A549 (cell line): ENCODE measurements at regions of chr6 and their contacts with region 1.

Region 1: GRCh38 chr6:27146706-27147505 is 100.6 kb upstream of the PRSS16 start:
- DNase-seq: peak; percentile 96 to 99
- ATAC-seq: peak; percentile 82 to 84
- H3K4me3 ChIP-seq: peak overlapping the region; percentile 67
- H3K27ac ChIP-seq: peak overlapping the region; percentile 89 to 98
- H3K4me1 ChIP-seq: peaks cover 26% of the 10 kb centered on the region; the same call in 2 of the 3 replicates
- CTCF ChIP-seq: no peak
- EP300 ChIP-seq: no peak
- POLR2A ChIP-seq: peak; percentile 96
- RAD21 ChIP-seq: no peak

Region 2: GRCh38 chr6:27126815-27127537 is 19.9 kb before region 1 on chr6:
- CTCF ChIA-PET with region 1: interaction called, 6 read pairs
- POLR2A ChIA-PET with region 1: interaction called, 226 read pairs
- DNase-seq: peak; percentile 41 to 91
- ATAC-seq: peak; percentile 86
- H3K4me3 ChIP-seq: peak overlapping the region; percentile 41
- H3K27ac ChIP-seq: peak overlapping the region; percentile 80 to 91
- H3K4me1 ChIP-seq: peaks cover 34% of the 10 kb centered on the region; the same call in 2 of the 3 replicates
- CTCF ChIP-seq: peak; percentile 82
- EP300 ChIP-seq: no peak
- POLR2A ChIP-seq: peak; percentile 22; the same call in 1 of the 2 replicates
- RAD21 ChIP-seq: peak; percentile 59 to 63

Region 3: GRCh38 chr6:27132532-27133280 is 14.2 kb before region 1 on chr6:
- CTCF ChIA-PET with region 1: interaction called, 7 read pairs
- POLR2A ChIA-PET with region 1: interaction called, 226 read pairs
- DNase-seq: peak; percentile 93 to 99
- ATAC-seq: peak; percentile 81 to 83
- H3K4me3 ChIP-seq: peak overlapping the region; percentile 75
- H3K27ac ChIP-seq: peak overlapping the region; percentile 85 to 96
- H3K4me1 ChIP-seq: peaks cover 46% of the 10 kb centered on the region
- CTCF ChIP-seq: no peak
- EP300 ChIP-seq: 0 out of 5 replicates have a peak, but pooled peaks of 1 of the 2 experiments have one; percentile 11
- POLR2A ChIP-seq: peak; percentile 96
- RAD21 ChIP-seq: no peak

Region 4: DNA sequence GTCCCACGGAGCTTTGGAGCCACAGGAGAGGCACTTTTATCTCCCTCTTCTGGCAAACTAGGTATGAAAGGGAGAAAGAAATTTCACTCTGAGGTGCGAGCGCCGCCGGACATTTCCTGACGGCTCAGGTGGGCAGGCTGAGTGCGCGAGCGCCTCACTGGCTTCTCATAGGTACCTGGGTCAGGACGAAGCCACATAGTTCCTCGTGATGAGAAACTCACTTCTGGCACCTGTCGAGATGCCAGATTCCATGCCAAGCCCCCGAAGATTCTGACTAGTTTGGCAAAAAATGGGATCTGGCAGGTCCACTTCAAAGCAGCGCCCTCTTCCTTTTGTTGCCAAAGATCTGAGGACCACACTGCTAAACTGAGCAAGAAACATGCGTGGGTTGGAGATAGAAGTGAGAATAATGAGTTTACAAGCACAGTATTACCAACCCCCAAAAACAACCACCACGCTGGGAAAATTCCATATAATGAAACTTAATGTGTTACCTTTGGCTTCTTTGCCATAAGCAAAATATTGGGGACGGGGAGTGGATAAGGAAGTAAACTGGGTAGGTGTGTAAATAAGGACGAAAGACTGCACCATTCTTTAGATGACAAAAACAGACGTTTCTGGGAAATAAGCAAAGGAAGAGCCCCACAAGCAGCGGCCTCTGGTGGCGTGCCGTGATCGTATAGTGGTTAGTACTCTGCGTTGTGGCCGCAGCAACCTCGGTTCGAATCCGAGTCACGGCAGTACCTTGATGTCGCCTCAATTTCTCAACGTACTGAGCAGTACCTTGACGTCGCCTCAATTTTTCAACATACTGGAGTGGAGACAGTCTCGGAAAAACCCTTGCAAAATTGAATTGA is 10.8 kb after region 1 on chr6:
- CTCF ChIA-PET with region 1: interaction called, 32 read pairs
- POLR2A ChIA-PET with region 1: interaction called, 11 read pairs
- DNase-seq: peak; percentile 52 to 87
- ATAC-seq: peak; percentile 88 to 89
- H3K4me3 ChIP-seq: peak overlapping the region; percentile 66
- H3K27ac ChIP-seq: peak overlapping the region; percentile 52 to 71; a peak in 5 of 6 replicates
- H3K4me1 ChIP-seq: peaks cover 3% of the 10 kb centered on the region; the same call in 1 of the 3 replicates
- CTCF ChIP-seq: peak; percentile 28; the same call in 2 of the 3 replicates
- EP300 ChIP-seq: no peak
- POLR2A ChIP-seq: no peak
- RAD21 ChIP-seq: no peak

Region 5: GRCh38 chr6:27809939-27810767 is 663.2 kb after region 1 on chr6:
- CTCF ChIA-PET with region 1: interaction called, 3 read pairs
- POLR2A ChIA-PET with region 1: interaction called, 30 read pairs
- DNase-seq: peak; percentile 80 to 95
- ATAC-seq: peak; percentile 58 to 59
- H3K4me3 ChIP-seq: peak overlapping the region; percentile 53
- H3K27ac ChIP-seq: peak overlapping the region; percentile 83 to 99
- H3K4me1 ChIP-seq: peaks cover 28% of the 10 kb centered on the region; the same call in 2 of the 3 replicates
- CTCF ChIP-seq: no peak
- EP300 ChIP-seq: no peak
- POLR2A ChIP-seq: peak; percentile 97
- RAD21 ChIP-seq: no peak